Activated T-helper 1 cell treated with anti-CD3 and anti-CD28 coated beads, Interleukin-12 subunit alpha, Interleukin-12 subunit beta, Interleukin-2, Interleukin-4 antibody, amounts not matched to agents 30 ng/mL and 10 ng/mL and 1 ng/mL, durations not matched to agents 14 hours and 24 hours and 36 hours (primary cell): ENCODE measurements at regions of chr15 and their contacts with region 1.

Region 1: GRCh38 chr15:90818251-90819210 is 49.9 kb upstream of the FURIN start:
- DNase-seq: peak; percentile 40
- H3K4me3 Mint-ChIP-seq: peak overlapping the region; percentile 74
- H3K27ac Mint-ChIP-seq: peak overlapping the region; percentile 99
- H3K4me1 Mint-ChIP-seq: peaks cover 82% of the 10 kb centered on the region
- H3K27me3 Mint-ChIP-seq: no peaks in the 10 kb centered on the region

Region 2: GRCh38 chr15:90807074-90807785 is 11.3 kb before region 1 on chr15:
- intact Hi-C with region 1: loop called (anchors 1 kb)
- DNase-seq: no peak
- H3K4me3 Mint-ChIP-seq: peak overlapping the region; percentile 68
- H3K27ac Mint-ChIP-seq: peak overlapping the region; percentile 86
- H3K4me1 Mint-ChIP-seq: peaks cover 68% of the 10 kb centered on the region
- H3K27me3 Mint-ChIP-seq: no peaks in the 10 kb centered on the region

Region 3: DNA sequence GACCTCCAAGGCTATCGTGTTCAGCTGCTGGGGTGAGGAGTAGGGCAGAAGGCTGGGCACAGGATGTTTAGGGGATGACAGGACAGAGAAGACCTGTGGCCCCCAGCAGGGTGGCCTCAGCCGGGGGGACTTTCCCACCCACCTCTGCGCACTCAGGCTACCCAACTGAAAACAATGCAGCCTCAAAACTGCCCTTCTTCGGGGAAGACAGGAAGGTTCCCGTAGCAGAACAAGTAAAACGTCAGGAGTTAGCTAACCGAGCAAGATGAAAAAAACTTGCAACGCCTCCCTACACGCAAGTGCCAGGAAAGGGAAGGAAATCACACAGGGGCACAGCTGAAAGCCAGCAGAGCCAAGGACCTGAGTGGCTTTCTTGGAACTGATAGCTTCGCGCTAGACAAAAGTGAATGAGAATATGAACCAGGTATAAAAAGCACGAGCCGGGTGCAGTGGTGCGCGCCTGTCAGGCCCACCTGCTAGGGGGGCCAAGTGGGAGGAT is 11.5 kb after region 1 on chr15:
- intact Hi-C with region 1: loop called (anchors 1 kb)
- DNase-seq: peak; percentile 82
- H3K4me3 Mint-ChIP-seq: peak overlapping the region; percentile 75
- H3K27ac Mint-ChIP-seq: peak overlapping the region; percentile 91
- H3K4me1 Mint-ChIP-seq: peaks cover 69% of the 10 kb centered on the region
- H3K27me3 Mint-ChIP-seq: no peaks in the 10 kb centered on the region

Region 4: DNA sequence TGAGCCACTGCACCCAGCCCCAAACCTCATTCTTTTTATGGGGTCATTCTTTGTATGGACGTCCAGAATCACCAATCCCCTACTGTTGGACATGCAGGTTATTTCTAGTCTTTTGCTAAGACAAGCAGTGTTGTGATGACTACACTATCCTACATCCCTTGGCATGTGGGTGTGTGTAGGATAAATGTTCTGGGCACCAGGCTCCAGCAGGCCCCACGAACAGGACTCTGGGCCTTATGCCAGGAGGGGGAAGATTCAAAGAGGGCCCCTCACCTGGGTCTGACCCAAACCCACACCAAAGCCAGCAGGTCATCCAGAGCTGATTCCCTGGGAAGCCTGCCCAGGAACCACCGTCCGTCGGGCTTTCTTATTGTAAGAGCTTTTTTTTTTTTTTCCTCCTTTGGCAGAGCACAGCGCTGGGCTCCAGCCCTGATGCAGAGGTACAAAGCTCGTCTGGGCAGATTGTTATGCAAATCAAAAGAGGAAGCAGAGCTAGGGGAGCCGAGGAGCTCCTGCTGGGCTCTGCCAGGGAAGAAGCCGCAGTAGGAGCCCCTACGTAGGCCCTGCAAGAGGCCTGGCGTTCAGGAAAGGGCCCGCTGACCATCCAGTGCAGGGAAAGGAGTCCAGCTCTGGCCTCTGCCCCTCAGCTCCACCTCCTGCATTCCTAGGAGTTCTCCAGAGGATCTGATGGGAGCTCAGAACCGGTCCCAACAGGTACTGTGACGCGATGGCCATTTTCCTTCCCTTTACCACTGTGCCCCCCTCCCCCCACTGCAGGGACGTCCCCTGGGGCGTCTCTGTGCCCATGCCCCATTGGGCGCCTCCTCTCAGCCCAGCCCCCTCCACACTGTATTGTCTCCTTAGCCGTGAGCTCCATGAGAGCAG is 20.9 kb after region 1 on chr15:
- intact Hi-C with region 1: loop called (anchors 1 kb)
- DNase-seq: no peak
- H3K4me3 Mint-ChIP-seq: peak overlapping the region; percentile 79
- H3K27ac Mint-ChIP-seq: peak overlapping the region; percentile 99
- H3K4me1 Mint-ChIP-seq: peaks cover 84% of the 10 kb centered on the region
- H3K27me3 Mint-ChIP-seq: no peaks in the 10 kb centered on the region

Region 5: GRCh38 chr15:91238644-91239425 is 420.3 kb after region 1 on chr15:
- intact Hi-C with region 1: no loop called
- DNase-seq: no peak
- H3K4me3 Mint-ChIP-seq: no peak overlapping the region
- H3K27ac Mint-ChIP-seq: no peak overlapping the region
- H3K4me1 Mint-ChIP-seq: no peaks in the 10 kb centered on the region
- H3K27me3 Mint-ChIP-seq: peaks cover 16% of the 10 kb centered on the region